GM12878 (cell line): ENCODE measurements at regions of chr15 and their contacts with region 1.

Region 1: DNA sequence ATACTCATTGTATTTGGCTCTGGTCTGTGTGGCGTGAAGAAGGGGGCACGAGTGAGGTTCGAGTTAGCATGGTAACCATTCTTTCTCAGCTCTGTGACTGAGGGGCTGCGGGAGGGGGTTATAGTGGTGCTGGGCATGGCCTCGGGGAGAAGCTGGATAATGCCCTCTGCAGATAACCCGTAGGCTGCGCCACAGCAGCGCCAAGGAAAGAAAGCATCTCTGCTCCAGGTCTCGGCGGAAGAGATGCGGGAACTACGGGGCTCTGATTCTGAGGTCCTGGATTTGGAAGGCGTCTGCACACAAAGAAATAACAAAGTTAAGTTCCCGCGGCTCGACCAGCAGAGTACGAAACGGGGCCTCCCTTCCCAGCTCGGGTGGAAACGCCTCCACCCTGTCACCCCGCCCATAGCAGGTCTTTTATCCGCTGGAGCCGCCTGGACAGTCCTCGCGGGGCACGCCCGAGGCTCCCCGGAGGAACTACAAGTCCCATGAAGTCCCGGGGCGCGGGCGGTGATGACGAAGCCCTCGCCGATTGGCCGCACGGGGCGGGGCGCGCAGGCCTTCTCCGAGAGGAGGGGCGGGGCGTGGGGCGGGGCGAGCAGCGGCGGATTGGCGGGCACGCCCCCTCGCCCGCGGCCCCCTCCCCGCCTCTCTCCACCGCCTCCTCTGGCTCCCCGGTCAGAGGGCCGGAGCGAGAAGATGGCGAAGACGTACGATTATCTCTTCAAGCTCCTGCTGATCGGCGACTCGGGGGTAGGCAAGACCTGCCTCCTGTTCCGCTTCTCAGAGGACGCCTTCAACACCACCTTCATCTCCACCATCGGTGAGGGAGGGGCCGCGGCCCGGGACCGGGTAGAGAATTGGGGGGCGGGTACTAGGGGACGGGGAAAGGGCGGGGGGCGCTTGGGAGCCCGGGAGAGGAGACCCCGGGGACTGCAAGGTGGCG is at the start of gene RAB8B:
- DNase-seq: peak; percentile 67
- ATAC-seq: peak; percentile 83
- H3K4me3 ChIP-seq: peak within 1 kb of the TSS; percentile 96
- H3K27ac ChIP-seq: peak within 1 kb of the TSS; percentile 86
- H3K4me1 ChIP-seq: peaks cover 20% of the 10 kb centered on the region
- H3K27me3 ChIP-seq: no peaks in the 10 kb centered on the region
- CTCF ChIP-seq: 0 out of 6 replicates have a peak, but pooled peaks of 1 of the 3 experiments have one; percentile 4
- EP300 ChIP-seq: 0 out of 4 replicates have a peak, but pooled peaks of 1 of the 2 experiments have one; percentile 10
- POLR2A ChIP-seq: peak; percentile 89
- RAD21 ChIP-seq: no peak
- polyA plus RNA-seq, gene RAB8B: 17.8 to 26.0 TPM

Region 2: GRCh38 chr15:62732078-62732477 is 457.1 kb before region 1 on chr15:
- CTCF ChIA-PET with region 1: no interaction called
- POLR2A ChIA-PET with region 1: no interaction called
- RAD21 ChIA-PET with region 1: no interaction called
- SMC1A ChIA-PET with region 1: no interaction called
- in situ Hi-C with region 1: no loop called
- intact Hi-C with region 1: no loop called
- DNase-seq: no peak
- ATAC-seq: no peak
- H3K4me3 ChIP-seq: no peak overlapping the region
- H3K27ac ChIP-seq: no peak overlapping the region
- H3K4me1 ChIP-seq: no peaks in the 10 kb centered on the region
- H3K27me3 ChIP-seq: no peaks in the 10 kb centered on the region
- CTCF ChIP-seq: no peak
- EP300 ChIP-seq: no peak
- POLR2A ChIP-seq: no peak
- RAD21 ChIP-seq: no peak

Region 3: DNA sequence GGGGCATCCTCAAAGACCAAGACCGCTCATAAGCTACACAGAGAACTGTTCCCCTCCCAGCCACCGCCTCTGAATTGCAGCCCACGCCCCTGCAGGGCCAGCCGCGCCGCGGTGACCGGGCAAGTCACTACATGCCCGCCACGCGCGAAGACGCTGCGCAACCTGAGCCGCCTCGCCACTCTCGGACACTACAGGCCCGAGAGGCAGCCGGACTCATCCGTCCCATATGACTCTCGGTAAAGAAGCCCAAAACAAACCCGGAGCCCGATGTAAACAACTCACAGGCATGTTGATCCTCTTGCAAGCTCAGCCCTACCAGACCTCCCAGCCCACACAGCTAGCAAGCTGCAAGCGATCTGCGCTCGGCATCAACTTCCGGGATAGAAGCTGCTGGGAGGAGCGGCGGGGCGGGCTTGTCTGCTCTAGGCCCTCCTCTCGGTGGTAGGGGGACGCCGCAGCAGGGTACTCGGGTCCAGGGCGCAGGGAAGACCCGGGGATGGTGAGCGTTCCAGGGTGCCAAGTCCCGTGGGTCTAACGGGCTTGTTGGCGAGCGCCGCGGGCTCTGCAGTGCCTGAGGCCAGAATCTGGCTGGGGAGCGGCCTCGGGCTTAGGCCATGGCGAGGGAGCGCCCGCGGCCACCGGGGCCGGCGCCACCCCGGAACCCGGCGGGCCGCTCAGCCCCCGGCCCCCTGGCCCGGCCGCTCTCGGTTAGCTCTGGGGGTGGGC is 31.9 kb before region 1 on chr15 and contains the start of gene RPS27L:
- CTCF ChIA-PET with region 1: interaction called, 7 read pairs
- POLR2A ChIA-PET with region 1: interaction called, 22 read pairs
- RAD21 ChIA-PET with region 1: interaction called, 16 read pairs
- SMC1A ChIA-PET with region 1: interaction called, 39 read pairs
- in situ Hi-C with region 1: no loop called
- intact Hi-C with region 1: loop called (anchors 2 kb)
- DNase-seq: peak; percentile 77
- ATAC-seq: peak; percentile 95
- H3K4me3 ChIP-seq: peak within 1 kb of the TSS; percentile 78
- H3K27ac ChIP-seq: peak within 1 kb of the TSS; percentile 96
- H3K4me1 ChIP-seq: peaks cover 10% of the 10 kb centered on the region
- H3K27me3 ChIP-seq: no peaks in the 10 kb centered on the region
- CTCF ChIP-seq: no peak
- EP300 ChIP-seq: peak; percentile 39 to 56; a peak in 2 of 4 replicates
- POLR2A ChIP-seq: peak; percentile 99
- RAD21 ChIP-seq: 0 out of 2 replicates have a peak, but pooled peaks have one; percentile 5
- polyA plus RNA-seq, gene RPS27L: 468 to 596 TPM

Region 4: GRCh38 chr15:63203451-63204090 is 14.4 kb after region 1 on chr15:
- CTCF ChIA-PET with region 1: interaction called, 48 read pairs
- POLR2A ChIA-PET with region 1: interaction called, 26 read pairs
- RAD21 ChIA-PET with region 1: interaction called, 58 read pairs
- SMC1A ChIA-PET with region 1: interaction called, 252 read pairs
- in situ Hi-C with region 1: no loop called
- intact Hi-C with region 1: no loop called
- DNase-seq: no peak
- ATAC-seq: peak; percentile 83
- H3K4me3 ChIP-seq: no peak overlapping the region
- H3K27ac ChIP-seq: peak overlapping the region; percentile 11; the same call in 1 of the 2 replicates
- H3K4me1 ChIP-seq: peaks cover 45% of the 10 kb centered on the region
- H3K27me3 ChIP-seq: no peaks in the 10 kb centered on the region
- CTCF ChIP-seq: peak in 2 of 3 experiments; percentile 6 to 8; a peak in 1 of 6 replicates
- EP300 ChIP-seq: no peak
- POLR2A ChIP-seq: no peak
- RAD21 ChIP-seq: peak; percentile 53; the same call in 1 of the 2 replicates

Region 5: GRCh38 chr15:63238796-63239195 is 49.6 kb after region 1 on chr15:
- CTCF ChIA-PET with region 1: interaction called, 7 read pairs
- POLR2A ChIA-PET with region 1: interaction called, 14 read pairs
- RAD21 ChIA-PET with region 1: interaction called, 38 read pairs
- SMC1A ChIA-PET with region 1: interaction called, 88 read pairs
- in situ Hi-C with region 1: no loop called
- intact Hi-C with region 1: loop called (anchors 5 kb)
- DNase-seq: peak; percentile 50
- ATAC-seq: peak; percentile 95
- H3K4me3 ChIP-seq: no peak overlapping the region
- H3K27ac ChIP-seq: no peak overlapping the region
- H3K4me1 ChIP-seq: peaks cover 18% of the 10 kb centered on the region
- H3K27me3 ChIP-seq: no peaks in the 10 kb centered on the region
- CTCF ChIP-seq: no peak
- EP300 ChIP-seq: no peak
- POLR2A ChIP-seq: no peak
- RAD21 ChIP-seq: no peak

Region 6: DNA sequence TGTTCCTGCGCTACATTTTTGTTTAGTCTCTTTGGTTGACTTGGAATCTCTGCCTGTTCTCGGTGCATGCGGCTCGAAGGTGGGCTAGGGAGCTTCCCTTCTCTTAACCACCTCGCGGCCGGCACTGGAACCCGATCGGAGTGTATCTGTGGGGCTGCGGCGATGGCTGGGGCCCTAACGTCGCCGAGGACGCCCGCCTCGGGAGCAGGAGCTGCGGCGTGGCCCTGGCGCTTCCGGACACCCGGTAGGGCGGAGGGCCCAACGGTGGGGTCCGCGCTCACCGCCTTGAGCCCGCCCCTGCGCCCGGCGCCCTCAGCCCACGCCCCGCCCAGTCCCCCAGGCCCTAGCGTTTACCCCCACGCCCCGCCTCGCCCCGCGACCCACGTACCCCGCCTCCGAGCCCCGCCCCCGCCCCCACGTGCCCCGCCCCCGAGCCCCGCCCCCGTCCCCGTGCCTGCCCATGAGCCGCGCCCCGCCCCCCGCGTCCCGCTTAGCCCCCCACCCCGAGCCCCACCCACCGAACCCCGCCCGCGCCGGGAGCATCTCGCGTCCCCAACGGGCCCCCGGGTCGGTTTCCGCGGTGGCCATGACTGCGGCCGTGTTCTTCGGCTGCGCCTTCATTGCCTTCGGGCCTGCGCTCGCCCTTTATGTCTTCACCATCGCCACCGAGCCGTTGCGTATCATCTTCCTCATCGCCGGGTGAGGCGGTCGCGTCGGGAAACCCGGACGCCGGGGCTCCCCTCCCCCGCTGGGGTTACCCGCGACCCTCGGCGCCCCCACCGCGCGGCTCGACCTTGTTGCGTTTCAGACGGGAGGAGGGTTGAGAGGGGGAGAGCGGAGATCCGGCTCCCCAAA is 88.1 kb after region 1 on chr15 and contains the start of gene APH1B:
- CTCF ChIA-PET with region 1: interaction called, 3 read pairs
- POLR2A ChIA-PET with region 1: interaction called, 4 read pairs
- RAD21 ChIA-PET with region 1: interaction called, 6 read pairs
- SMC1A ChIA-PET with region 1: interaction called, 15 read pairs
- in situ Hi-C with region 1: no loop called
- intact Hi-C with region 1: loop called (anchors 2 kb)
- DNase-seq: no peak
- ATAC-seq: peak; percentile 94
- H3K4me3 ChIP-seq: peak within 1 kb of the TSS; percentile 94
- H3K27ac ChIP-seq: peak within 1 kb of the TSS; percentile 62
- H3K4me1 ChIP-seq: peaks cover 4% of the 10 kb centered on the region; the same call in 1 of the 2 replicates
- H3K27me3 ChIP-seq: no peaks in the 10 kb centered on the region
- CTCF ChIP-seq: no peak
- EP300 ChIP-seq: no peak
- POLR2A ChIP-seq: peak; percentile 89
- RAD21 ChIP-seq: no peak
- polyA plus RNA-seq, gene APH1B: 12.9 to 17.6 TPM